Left colon (tissue), 2 donors: ENCODE measurements at regions of chr1 and their contacts with region 1.

Region 1: GRCh38 chr1:92754000-92754718 is 30.7 kb downstream of the EVI5 start:
- DNase-seq: no peak
- ATAC-seq: no peak

Region 2: GRCh38 chr1:92817986-92818764 is 64.0 kb after region 1 on chr1:
- intact Hi-C with region 1: loop called in 1 of 2 experiments (anchors 5 kb)
- DNase-seq: no peak
- ATAC-seq: peak; percentile 49

Region 3: GRCh38 chr1:93015590-93015989 is 261.4 kb after region 1 on chr1:
- intact Hi-C with region 1: no loop called
- DNase-seq: no peak
- ATAC-seq: no peak